Heart right ventricle (tissue), 16 donors: ENCODE measurements at regions of chr15 and their contacts with region 1.

Region 1: DNA sequence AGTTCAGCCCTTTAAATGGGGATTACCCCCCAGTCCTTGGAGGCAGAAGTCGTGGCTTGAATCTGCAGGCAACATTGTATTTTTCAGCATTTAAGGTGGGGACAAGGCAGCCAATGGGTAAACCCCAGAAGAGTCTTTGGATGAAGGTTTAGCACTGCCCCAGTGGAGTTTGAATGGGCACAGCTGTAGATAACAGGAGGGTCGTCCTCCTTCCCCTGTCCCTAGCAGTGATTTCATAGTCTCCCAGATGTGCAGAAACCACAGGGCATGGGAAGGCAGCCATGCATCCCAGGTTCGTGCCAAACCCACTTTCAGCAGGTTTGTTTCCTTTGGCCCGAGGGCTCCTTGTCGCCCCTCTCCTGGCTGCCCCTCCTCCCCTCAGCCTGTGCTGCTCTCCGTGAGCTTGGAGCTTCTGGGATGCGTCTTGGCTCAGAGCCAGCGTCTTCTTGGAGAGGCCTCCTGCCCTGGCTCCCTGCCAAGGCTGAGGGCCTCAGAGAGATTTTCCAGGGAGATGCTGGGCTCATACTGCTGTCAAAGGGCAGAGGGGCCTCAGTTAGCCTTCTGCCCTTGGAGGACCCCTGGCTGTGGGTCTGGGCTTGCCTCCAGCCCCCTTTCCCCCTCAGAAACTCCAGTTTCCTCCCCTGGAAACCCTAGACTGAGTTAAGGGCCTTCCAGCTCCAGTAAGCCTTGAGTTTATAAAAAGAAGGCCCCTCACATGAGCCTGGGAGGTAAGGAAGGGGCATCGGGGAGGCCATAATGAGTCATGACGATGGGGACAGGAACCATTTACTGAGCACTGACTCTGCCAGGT is 48.9 kb upstream of the POLG start:
- DNase-seq: peak; percentile 56
- ATAC-seq: no peak
- H3K4me3 ChIP-seq: no peak overlapping the region
- H3K27ac ChIP-seq: no peak overlapping the region
- H3K4me1 ChIP-seq: peaks cover 2 to 16% (median 9%) of the 10 kb centered on the region in 9 donors
- H3K27me3 ChIP-seq: peaks cover 13 to 86% (median 62%) of the 10 kb centered on the region in 7 donors
- CTCF ChIP-seq: no peak

Region 2: GRCh38 chr15:89230277-89230676 is 153.3 kb before region 1 on chr15:
- intact Hi-C with region 1: no loop called
- DNase-seq: no peak
- ATAC-seq: no peak
- H3K4me3 ChIP-seq: no peak overlapping the region
- H3K27ac ChIP-seq: no peak overlapping the region
- H3K4me1 ChIP-seq: no peaks in the 10 kb centered on the region
- H3K27me3 ChIP-seq: peaks cover 0 to 3% (median 0%) of the 10 kb centered on the region in 7 donors
- CTCF ChIP-seq: no peak

Region 3: DNA sequence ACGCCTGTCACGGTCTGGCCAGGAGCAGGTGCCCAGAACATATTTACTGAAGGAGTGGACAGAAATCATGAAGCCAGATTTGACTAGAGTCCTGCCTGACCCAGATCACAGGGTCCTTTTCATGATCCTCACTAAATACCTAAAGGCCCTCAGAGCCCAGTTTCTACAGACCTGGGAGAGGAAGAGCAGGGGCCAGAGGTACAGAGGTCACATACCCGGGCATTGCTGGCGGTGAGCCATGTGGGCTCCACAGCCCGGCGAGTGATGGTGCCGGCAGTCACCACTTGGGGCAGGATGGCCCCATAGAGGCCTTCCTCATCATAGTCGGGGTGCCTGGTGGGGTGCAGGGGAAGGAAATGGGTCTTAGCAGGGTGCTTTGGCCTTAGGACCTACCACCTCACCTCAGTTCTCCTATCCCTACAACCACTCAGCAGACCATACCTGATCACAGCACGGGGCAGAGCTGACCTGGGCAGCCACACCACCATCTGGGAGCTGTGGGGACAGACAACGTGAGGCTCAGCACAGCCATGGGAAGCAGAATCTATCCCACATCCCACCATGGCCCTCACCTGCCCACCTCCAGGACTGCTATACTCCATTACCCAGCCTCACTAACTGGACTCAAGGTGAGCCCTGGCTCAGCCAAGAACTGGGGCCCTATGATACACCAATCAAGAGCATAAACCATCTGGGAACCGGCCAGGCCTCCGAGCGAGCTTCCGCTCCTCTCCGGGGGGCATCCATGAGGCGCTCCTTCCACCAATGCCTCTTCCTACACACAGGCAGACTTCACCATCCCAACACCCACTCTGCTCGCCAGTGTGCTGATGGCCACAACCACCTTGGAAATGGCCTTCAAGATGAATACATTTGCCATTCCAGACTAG is 61.8 kb before region 1 on chr15:
- intact Hi-C with region 1: loop called in 1 of 10 experiments (anchors 10 kb)
- DNase-seq: no peak
- ATAC-seq: peak in 2 of 8 donors; percentile 8 to 10
- H3K4me3 ChIP-seq: no peak overlapping the region
- H3K27ac ChIP-seq: no peak overlapping the region
- H3K4me1 ChIP-seq: no peaks in the 10 kb centered on the region
- H3K27me3 ChIP-seq: no peaks in the 10 kb centered on the region
- CTCF ChIP-seq: no peak